ENCODE measurements at regions of chr2 and their contacts with region 1.

Region 1: GRCh38 chr2:96174251-96175144 is 29.3 kb upstream of the DUSP2 start:
- H3K4me3 Mint-ChIP-seq: no peak overlapping the region
- H3K27ac Mint-ChIP-seq: no peak overlapping the region
- H3K4me1 Mint-ChIP-seq: peaks cover 17% of the 10 kb centered on the region
- H3K27me3 Mint-ChIP-seq: no peaks in the 10 kb centered on the region

Region 2: GRCh38 chr2:96138179-96139145 is 36.0 kb before region 1 on chr2 and contains the start of gene ASTL:
- intact Hi-C with region 1: loop called (anchors 1 kb)
- H3K4me3 Mint-ChIP-seq: no peak within 1 kb of the TSS
- H3K27ac Mint-ChIP-seq: no peak within 1 kb of the TSS
- H3K4me1 Mint-ChIP-seq: peaks cover 24% of the 10 kb centered on the region
- H3K27me3 Mint-ChIP-seq: peaks cover 17% of the 10 kb centered on the region

Region 3: DNA sequence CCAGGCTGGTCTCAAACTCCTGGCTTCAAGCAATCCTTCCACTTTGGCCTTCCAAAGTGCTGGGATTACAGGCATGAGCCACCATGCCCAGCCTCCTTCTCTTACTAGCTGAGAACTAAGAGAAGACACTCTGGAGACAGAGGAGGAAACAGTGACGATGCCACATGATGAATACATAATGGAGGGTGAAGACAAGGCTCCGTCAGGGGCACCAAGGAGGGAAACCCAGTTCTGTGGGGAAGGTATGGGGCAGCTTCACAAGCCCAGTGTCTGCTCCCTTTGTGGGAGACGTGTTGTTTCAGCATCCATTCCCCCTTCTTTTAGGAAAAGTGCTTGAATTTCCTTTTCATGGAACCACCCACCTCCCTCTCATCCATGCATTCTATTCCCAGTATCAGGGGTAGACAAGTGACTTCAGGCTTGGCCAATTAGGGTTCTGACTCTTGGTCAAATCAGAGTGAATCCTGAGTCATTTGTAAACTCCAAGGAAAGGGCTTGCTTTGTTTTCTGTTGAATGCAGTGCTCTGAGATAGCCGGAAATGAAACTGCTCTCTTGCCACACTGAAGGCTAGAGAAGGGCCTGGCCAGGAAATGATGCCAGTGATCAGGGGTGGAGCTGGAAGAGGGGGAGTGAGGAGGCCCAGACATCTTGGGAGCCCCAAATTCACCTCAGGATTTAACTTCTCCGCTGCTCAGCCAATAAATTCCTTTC is 67.6 kb after region 1 on chr2:
- intact Hi-C with region 1: no loop called
- H3K4me3 Mint-ChIP-seq: peak overlapping the region; percentile 68
- H3K27ac Mint-ChIP-seq: peak overlapping the region; percentile 94
- H3K4me1 Mint-ChIP-seq: peaks cover 80% of the 10 kb centered on the region
- H3K27me3 Mint-ChIP-seq: no peaks in the 10 kb centered on the region

Measured in dendritic cell treated with granulocyte-macrophage colony-stimulating factor and Interleukin-4, amounts not matched to agents 40 ng/mL and 50 ng/mL, for 4 days (primary cell).